ENCODE measurements at regions of chr1 and their contacts with region 1.

Region 1: GRCh38 chr1:15684468-15685291 is 560 bp downstream of the PLEKHM2 start:
- DNase-seq: peak; percentile 43 to 47
- ATAC-seq: peak; percentile 19 to 57 (median 38)
- H3K4me3 ChIP-seq: peak overlapping the region; percentile 61 to 98 (median 94)
- H3K27ac ChIP-seq: peak overlapping the region; percentile 77 to 99 (median 94)
- H3K4me1 ChIP-seq: peaks cover 3 to 69% (median 35%) of the 10 kb centered on the region in 9 donors
- H3K27me3 ChIP-seq: no peaks in the 10 kb centered on the region
- CTCF ChIP-seq: peak in 3 of 9 donors; percentile 7 to 15 (median 14)

Region 2: DNA sequence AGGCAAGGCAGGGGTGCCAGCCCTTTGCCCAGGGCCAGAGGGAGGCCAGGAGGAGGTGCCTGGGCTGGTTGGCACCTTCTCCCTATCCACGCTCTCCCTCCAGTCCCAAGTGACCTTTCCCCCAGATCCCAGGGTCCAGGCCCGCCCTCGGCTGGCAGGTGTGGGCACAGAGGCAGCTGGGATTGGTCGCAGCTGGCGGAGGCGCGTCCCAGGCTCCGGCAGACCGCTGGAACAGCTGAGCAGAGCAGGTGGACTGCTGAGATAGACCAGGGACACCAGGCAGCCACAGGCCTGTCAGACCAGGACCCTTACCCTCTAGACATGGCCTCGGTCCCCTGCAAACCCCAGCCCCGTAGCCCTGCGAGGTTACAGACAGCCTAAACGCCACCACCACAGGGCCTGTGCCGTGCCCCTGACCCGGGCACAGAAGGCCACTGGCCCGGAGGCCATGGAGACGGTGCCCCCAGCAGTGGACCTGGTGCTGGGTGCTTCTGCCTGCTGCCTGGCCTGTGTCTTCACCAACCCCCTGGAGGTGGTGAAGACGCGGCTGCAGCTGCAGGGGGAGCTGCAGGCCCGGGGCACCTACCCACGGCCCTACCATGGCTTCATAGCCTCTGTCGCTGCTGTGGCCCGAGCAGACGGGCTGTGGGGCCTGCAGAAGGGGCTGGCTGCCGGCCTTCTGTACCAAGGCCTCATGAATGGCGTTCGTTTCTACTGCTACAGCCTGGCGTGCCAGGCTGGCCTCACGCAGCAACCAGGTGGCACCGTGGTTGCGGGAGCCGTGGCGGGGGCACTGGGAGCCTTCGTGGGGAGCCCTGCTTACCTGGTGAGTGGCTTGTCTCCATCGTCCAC is 51.6 kb after region 1 on chr1 and contains the start of gene SLC25A34:
- intact Hi-C with region 1: loop called in 1 of 10 experiments (anchors 10 kb)
- DNase-seq: peak; percentile 79 to 83
- ATAC-seq: peak; percentile 73 to 92 (median 84)
- H3K4me3 ChIP-seq: peak within 1 kb of the TSS in 9 of 10 donors; percentile 22 to 42 (median 30)
- H3K27ac ChIP-seq: peak within 1 kb of the TSS; percentile 71 to 92 (median 86)
- H3K4me1 ChIP-seq: peaks cover 0 to 37% (median 21%) of the 10 kb centered on the region in 9 donors
- H3K27me3 ChIP-seq: no peaks in the 10 kb centered on the region
- CTCF ChIP-seq: no peak
- total RNA-seq, gene SLC25A34: 6.0 to 44.9 (median 13.6) TPM